ENCODE measurements at regions of chr2 and their contacts with region 1.

Region 1: GRCh38 chr2:165064743-165065142 is 109.4 kb upstream of the SLC38A11 start:
- DNase-seq: no peak
- ATAC-seq: no peak
- H3K4me3 ChIP-seq: no peak overlapping the region
- H3K27ac ChIP-seq: no peak overlapping the region
- H3K4me1 ChIP-seq: peaks cover 0 to 6% (median 0%) of the 10 kb centered on the region in 12 donors
- H3K27me3 ChIP-seq: no peaks in the 10 kb centered on the region
- CTCF ChIP-seq: no peak
- POLR2A ChIP-seq: no peak

Region 2: DNA sequence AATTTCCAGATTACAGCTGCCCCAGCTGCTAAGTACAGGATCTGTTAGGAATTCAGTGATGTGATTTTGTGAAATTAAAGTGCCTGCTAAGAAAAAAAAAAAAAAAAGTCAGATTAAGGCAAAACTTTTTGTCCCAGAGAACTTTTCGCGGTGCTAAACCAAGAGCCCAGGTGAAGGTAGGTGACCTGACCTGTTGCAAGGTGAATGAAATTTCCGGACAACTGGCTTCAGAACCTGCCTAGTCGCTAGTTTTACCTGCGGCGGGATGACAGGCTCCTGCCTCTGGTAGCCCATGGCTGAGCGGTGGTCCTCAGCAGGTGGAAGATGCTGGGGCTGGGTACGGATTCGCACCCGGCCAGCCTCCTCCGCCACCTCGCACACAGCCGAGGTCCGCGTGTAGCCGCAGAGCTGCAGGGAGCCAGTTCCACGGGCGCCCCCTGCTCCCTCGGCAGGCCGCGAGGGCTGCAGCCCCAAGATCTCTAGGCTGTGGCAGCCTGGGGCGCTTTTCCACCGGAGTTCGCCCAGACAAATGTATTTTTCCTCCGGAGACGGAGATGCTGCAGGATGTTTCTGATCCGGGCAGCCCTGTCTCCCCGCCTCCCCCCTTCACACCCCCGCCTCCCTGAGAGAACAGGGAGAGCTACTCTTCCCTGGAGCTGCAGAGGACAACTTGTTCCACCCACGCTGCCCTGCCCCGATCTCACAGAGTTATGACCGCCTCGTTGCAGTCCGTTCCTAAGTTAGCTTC is 109.6 kb before region 1 on chr2 and contains the start of gene SLC38A11:
- intact Hi-C with region 1: no loop called
- DNase-seq: peak; percentile 20 to 65 (median 38)
- ATAC-seq: peak; percentile 51 to 87 (median 76)
- H3K4me3 ChIP-seq: peak within 1 kb of the TSS in 11 of 12 donors; percentile 11 to 58 (median 42)
- H3K27ac ChIP-seq: peak within 1 kb of the TSS in 1 of 12 donors; percentile 18
- H3K4me1 ChIP-seq: peaks cover 0 to 8% (median 2%) of the 10 kb centered on the region in 12 donors
- H3K27me3 ChIP-seq: peaks cover 0 to 30% (median 6%) of the 10 kb centered on the region in 9 donors
- CTCF ChIP-seq: peak in 3 of 12 donors; percentile 8 to 20 (median 14)
- POLR2A ChIP-seq: no peak
- total RNA-seq, gene SLC38A11: 0.25 to 1.9 (median 0.51) TPM

Region 3: DNA sequence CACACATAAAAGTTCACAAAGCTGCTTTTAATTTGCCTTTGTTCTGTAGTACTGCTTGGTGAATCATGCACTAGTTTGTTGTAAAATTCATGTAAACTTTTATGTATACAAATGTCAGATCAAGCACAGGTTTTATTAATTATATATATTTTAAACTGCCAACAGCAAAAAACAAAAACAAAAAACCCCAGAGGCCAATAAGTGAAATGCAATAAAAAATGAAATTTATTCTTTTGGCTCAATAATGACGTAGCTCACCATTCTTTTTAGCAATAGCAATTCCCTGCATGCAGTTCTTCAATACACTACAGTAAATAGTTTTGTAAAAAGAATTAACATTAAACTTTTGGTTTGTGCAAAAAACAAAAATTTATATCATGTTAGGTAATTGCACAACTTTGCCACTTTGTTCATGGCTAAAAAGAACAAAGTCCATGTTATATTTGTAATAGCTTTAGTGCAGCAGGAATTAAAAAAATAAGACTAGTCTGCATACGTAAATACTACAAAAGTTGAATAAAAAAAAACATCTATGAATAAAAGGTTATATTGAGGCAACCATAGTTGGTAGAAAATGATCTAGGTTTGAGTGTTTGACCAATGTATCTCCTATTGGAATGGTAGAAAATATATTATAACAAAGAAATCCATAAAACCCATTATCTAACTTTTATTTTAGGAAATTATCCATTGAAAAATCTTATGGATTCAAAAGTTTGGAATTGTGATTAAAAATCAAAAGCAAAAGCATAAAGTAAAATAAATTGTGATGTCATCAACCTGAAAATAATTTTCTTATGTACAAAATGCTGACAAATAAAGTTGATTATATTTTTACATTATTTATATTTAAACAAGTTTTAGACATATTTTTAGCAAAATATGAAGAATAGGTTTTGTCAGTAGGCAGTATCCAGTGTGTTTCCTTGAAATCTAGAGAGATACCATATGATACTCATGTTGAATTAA is 23.5 kb after region 1 on chr2:
- intact Hi-C with region 1: loop called in 1 of 10 experiments (anchors 2 kb)
- DNase-seq: no peak
- ATAC-seq: no peak
- H3K4me3 ChIP-seq: no peak overlapping the region
- H3K27ac ChIP-seq: no peak overlapping the region
- H3K4me1 ChIP-seq: no peaks in the 10 kb centered on the region
- H3K27me3 ChIP-seq: no peaks in the 10 kb centered on the region
- CTCF ChIP-seq: peak in 2 of 12 donors; percentile 28 to 41
- POLR2A ChIP-seq: no peak

Region 4: DNA sequence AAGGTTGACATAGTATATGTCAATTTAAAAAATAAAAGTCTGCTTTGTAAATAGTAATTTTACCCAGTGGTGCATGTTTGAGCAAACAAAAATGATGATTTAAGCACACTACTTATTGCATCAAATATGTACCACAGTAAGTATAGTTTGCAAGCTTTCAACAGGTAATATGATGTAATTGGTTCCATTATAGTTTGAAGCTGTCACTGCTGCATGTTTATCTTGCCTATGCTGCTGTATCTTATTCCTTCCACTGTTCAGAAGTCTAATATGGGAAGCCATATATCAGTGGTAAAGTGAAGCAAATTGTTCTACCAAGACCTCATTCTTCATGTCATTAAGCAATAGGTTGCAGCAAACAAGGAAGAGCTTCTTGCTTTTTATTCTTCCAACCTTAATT is 326.1 kb after region 1 on chr2:
- intact Hi-C with region 1: no loop called
- DNase-seq: no peak
- ATAC-seq: no peak
- H3K4me3 ChIP-seq: no peak overlapping the region
- H3K27ac ChIP-seq: no peak overlapping the region
- H3K4me1 ChIP-seq: no peaks in the 10 kb centered on the region
- H3K27me3 ChIP-seq: peaks cover 0 to 1% (median 0%) of the 10 kb centered on the region in 9 donors
- CTCF ChIP-seq: no peak
- POLR2A ChIP-seq: no peak

Region 5: DNA sequence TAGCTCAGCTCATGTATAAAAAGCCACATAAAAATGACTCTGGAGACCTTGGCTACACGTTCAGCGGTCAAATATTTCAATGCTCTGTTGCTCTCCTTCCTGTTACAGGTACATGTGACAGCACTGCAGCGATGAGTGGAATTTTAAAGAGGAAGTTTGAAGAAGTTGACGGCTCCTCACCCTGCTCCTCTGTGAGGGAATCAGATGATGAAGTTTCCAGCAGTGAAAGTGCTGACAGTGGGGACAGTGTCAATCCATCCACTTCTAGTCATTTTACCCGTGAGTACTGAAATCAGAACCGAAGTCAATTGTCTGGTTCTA is 530.2 kb after region 1 on chr2:
- intact Hi-C with region 1: no loop called
- DNase-seq: no peak
- ATAC-seq: no peak
- H3K4me3 ChIP-seq: no peak overlapping the region
- H3K27ac ChIP-seq: no peak overlapping the region
- H3K4me1 ChIP-seq: no peaks in the 10 kb centered on the region
- H3K27me3 ChIP-seq: no peaks in the 10 kb centered on the region
- CTCF ChIP-seq: no peak
- POLR2A ChIP-seq: no peak

Measured in heart left ventricle (tissue), 16 donors.